ENCODE measurements at regions of chr6 and their contacts with region 1.

Region 1: GRCh38 chr6:111997078-111997852 is 56.6 kb upstream of the CCN6 start:
- DNase-seq: peak; percentile 60 to 82 (median 75)
- ATAC-seq: peak; percentile 89
- H3K4me3 ChIP-seq: peak overlapping the region; percentile 2
- H3K4me3 Mint-ChIP-seq: peak overlapping the region; percentile 58 to 91 (median 83)
- H3K27ac ChIP-seq: peak overlapping the region; percentile 55
- H3K27ac Mint-ChIP-seq: peak overlapping the region; percentile 44 to 97 (median 93)
- H3K4me1 ChIP-seq: peaks cover 19 to 45% of the 10 kb centered on the region in 2 donors
- H3K4me1 Mint-ChIP-seq: peaks cover 35 to 63% (median 50%) of the 10 kb centered on the region in 7 donors
- H3K27me3 ChIP-seq: no peaks in the 10 kb centered on the region
- H3K27me3 Mint-ChIP-seq: no peaks in the 10 kb centered on the region

Region 2: GRCh38 chr6:111605100-111605751 is 392.0 kb before region 1 on chr6:
- CTCF ChIA-PET with region 1: no interaction called
- POLR2A ChIA-PET with region 1: no interaction called
- intact Hi-C with region 1: loop called in 1 of 2 experiments (anchors 5 kb)
- DNase-seq: peak in 8 of 9 donors; percentile 12 to 60 (median 34)
- ATAC-seq: peak; percentile 56
- H3K4me3 ChIP-seq: peak overlapping the region; percentile 85
- H3K4me3 Mint-ChIP-seq: peak overlapping the region; percentile 89 to 97 (median 94)
- H3K27ac ChIP-seq: peak overlapping the region; percentile 84
- H3K27ac Mint-ChIP-seq: peak overlapping the region; percentile 90 to 98 (median 95)
- H3K4me1 ChIP-seq: peaks cover 13 to 15% of the 10 kb centered on the region in 2 donors
- H3K4me1 Mint-ChIP-seq: peaks cover 25 to 61% (median 58%) of the 10 kb centered on the region in 7 donors
- H3K27me3 ChIP-seq: no peaks in the 10 kb centered on the region
- H3K27me3 Mint-ChIP-seq: peaks cover 0 to 2% (median 0%) of the 10 kb centered on the region in 5 donors

Region 3: GRCh38 chr6:111764238-111765175 is 232.8 kb before region 1 on chr6:
- CTCF ChIA-PET with region 1: interaction called, 6 read pairs
- POLR2A ChIA-PET with region 1: no interaction called
- intact Hi-C with region 1: loop called (anchors 1 to 2 kb)
- DNase-seq: peak in 2 of 9 donors; percentile 48 to 63
- ATAC-seq: peak; percentile 23
- H3K4me3 ChIP-seq: peak overlapping the region; percentile 18
- H3K4me3 Mint-ChIP-seq: peak overlapping the region; percentile 48 to 94 (median 69)
- H3K27ac ChIP-seq: peak overlapping the region; percentile 97
- H3K27ac Mint-ChIP-seq: peak overlapping the region; percentile 84 to 100 (median 98)
- H3K4me1 ChIP-seq: peaks cover 90 to 93% of the 10 kb centered on the region in 2 donors
- H3K4me1 Mint-ChIP-seq: peaks cover 74 to 100% (median 99%) of the 10 kb centered on the region in 7 donors
- H3K27me3 ChIP-seq: no peaks in the 10 kb centered on the region
- H3K27me3 Mint-ChIP-seq: no peaks in the 10 kb centered on the region

Region 4: DNA sequence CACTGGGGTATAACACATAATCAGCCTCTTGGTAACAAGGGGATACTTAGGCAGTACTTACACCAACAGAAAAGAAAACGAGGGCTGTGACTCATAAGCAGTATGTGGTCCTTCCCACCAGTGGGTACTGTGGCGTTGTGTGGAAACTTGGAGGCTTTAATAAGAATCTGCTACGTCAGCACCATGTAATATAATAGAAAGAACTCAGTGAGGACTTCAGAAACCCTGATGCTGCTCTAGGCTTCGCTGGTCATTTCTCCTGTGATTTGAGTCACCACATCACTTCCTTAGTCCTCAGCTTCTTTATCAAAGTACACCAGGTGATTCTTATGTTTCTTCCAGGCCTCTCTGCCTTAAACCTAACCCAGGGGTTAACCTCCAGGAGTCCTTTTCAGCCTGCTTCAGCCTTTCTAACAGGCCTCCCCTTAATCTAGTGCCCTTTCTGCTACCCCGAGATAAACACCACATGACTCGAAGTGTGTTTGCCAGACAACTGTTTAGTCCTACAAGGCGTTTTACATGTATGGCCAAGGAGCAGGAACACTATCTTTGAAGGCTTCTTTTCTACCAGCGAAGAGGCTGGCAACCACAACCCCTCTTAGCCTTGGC is 192.5 kb before region 1 on chr6:
- CTCF ChIA-PET with region 1: interaction called, 4 read pairs
- POLR2A ChIA-PET with region 1: interaction called, 4 read pairs
- intact Hi-C with region 1: loop called (anchors 1 kb)
- DNase-seq: peak in 8 of 9 donors; percentile 31 to 77 (median 56)
- ATAC-seq: peak; percentile 89
- H3K4me3 ChIP-seq: peak overlapping the region; percentile 7
- H3K4me3 Mint-ChIP-seq: peak overlapping the region; percentile 20 to 73 (median 64)
- H3K27ac ChIP-seq: peak overlapping the region; percentile 68
- H3K27ac Mint-ChIP-seq: peak overlapping the region; percentile 78 to 97 (median 92)
- H3K4me1 ChIP-seq: peaks cover 59 to 64% of the 10 kb centered on the region in 2 donors
- H3K4me1 Mint-ChIP-seq: peaks cover 54 to 96% (median 88%) of the 10 kb centered on the region in 7 donors
- H3K27me3 ChIP-seq: no peaks in the 10 kb centered on the region
- H3K27me3 Mint-ChIP-seq: no peaks in the 10 kb centered on the region

Region 5: DNA sequence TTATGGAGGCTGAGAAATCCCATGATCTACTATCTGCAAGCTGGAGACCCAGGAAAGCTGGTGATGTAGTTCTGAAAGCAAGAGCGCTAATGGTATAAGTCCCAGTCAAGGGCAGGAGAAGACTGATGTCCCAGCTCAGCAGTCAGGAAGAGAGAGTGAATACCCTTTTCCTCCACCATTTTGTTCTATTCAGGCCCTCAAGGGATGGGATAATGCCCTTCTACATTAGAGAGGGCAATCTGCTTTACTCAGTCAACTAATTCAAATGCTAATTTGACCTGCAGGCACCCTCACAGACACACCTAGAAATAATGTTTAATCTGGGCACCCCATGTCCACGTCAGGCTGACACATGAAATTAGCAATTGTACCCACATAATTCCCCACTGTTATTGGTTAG is 113.2 kb before region 1 on chr6:
- CTCF ChIA-PET with region 1: no interaction called
- POLR2A ChIA-PET with region 1: no interaction called
- intact Hi-C with region 1: no loop called
- DNase-seq: no peak
- ATAC-seq: no peak
- H3K4me3 ChIP-seq: no peak overlapping the region
- H3K4me3 Mint-ChIP-seq: no peak overlapping the region
- H3K27ac ChIP-seq: no peak overlapping the region
- H3K27ac Mint-ChIP-seq: no peak overlapping the region
- H3K4me1 ChIP-seq: no peaks in the 10 kb centered on the region
- H3K4me1 Mint-ChIP-seq: peaks cover 0 to 2% (median 0%) of the 10 kb centered on the region in 7 donors
- H3K27me3 ChIP-seq: no peaks in the 10 kb centered on the region
- H3K27me3 Mint-ChIP-seq: peaks cover 0 to 15% (median 0%) of the 10 kb centered on the region in 5 donors

Region 6: DNA sequence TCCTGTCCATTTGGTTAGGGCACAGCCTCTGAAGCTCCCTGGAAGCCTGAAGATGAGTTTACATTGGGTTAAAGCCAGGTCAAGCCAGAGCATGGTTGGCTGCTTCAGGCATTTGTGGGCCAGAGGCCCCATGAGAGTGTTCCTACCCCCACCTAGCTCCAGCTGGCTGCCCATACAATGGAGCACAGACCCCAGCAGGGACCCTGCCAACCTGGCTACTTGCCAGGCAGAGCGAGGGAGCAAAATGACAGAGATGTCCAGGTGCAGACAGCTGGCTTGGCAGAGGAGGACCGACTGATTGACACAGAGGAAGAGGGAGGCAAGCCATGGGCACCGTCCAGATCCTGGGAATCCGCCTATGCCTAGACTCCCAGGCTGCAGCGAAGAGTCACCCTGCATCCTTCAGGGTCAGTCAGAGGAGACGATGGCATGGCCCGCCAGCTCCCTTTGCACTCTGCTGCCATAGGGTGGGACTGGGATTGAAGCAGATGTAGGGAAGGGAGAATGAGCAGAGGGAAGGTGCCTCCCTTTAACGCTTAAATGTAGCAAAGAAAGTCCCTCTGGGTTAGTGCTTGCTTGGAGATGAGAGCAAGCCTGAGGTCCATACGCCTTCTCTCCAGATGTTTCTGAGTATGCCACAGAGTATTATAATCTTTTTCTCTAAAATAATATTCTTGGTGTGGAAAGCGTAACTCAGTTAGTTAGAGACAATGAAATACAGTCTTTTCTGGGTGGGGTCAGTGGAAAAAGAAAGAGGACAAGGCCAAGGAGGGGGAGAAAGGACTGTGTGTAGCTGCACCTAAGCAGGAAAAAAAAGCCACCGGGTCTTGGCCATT is 46.4 kb before region 1 on chr6:
- CTCF ChIA-PET with region 1: no interaction called
- POLR2A ChIA-PET with region 1: no interaction called
- intact Hi-C with region 1: loop called in 1 of 2 experiments (anchors 5 kb)
- DNase-seq: no peak
- ATAC-seq: no peak
- H3K4me3 ChIP-seq: no peak overlapping the region
- H3K4me3 Mint-ChIP-seq: no peak overlapping the region
- H3K27ac ChIP-seq: no peak overlapping the region
- H3K27ac Mint-ChIP-seq: no peak overlapping the region
- H3K4me1 ChIP-seq: no peaks in the 10 kb centered on the region
- H3K4me1 Mint-ChIP-seq: peaks cover 7 to 22% (median 18%) of the 10 kb centered on the region in 7 donors
- H3K27me3 ChIP-seq: no peaks in the 10 kb centered on the region
- H3K27me3 Mint-ChIP-seq: peaks cover 0 to 31% (median 0%) of the 10 kb centered on the region in 5 donors

Region 7: DNA sequence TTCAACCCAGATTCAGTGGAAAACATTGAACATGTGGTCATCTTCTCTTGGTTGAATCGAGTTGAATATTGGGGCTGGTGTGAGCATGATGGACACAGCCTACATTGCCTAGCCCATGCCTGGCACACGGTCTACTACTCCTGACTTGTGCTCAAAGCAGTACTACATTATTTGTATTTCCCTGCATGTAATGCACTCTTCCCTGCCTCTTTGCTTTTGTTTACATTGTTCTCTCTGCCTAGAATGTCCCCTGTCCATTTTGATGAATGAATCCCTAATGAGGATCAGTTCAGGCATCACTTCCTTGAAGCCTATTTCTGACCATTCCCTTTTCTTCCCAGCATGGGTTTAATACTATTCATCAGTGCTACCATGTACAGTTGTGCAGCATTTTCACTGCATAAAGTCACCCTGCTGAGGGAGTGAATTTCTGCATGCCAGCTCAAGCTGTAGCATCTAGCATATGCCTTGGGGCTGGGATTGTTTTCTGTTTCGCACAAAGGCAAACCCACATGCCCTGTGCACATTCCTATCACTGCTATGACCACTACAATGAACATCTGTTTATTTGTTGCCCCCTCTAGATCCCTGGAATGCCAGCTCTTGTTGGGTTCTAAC is 18.6 kb before region 1 on chr6:
- CTCF ChIA-PET with region 1: interaction called, 19 read pairs
- POLR2A ChIA-PET with region 1: interaction called, 48 read pairs
- intact Hi-C with region 1: loop called (anchors 1 to 2 kb)
- DNase-seq: no peak
- ATAC-seq: no peak
- H3K4me3 ChIP-seq: no peak overlapping the region
- H3K4me3 Mint-ChIP-seq: peak overlapping the region in 6 of 10 donors; percentile 2 to 82 (median 44)
- H3K27ac ChIP-seq: no peak overlapping the region
- H3K27ac Mint-ChIP-seq: peak overlapping the region in 8 of 9 donors; percentile 55 to 98 (median 94)
- H3K4me1 ChIP-seq: peaks cover 2 to 89% of the 10 kb centered on the region in 2 donors
- H3K4me1 Mint-ChIP-seq: peaks cover 40 to 99% (median 91%) of the 10 kb centered on the region in 7 donors
- H3K27me3 ChIP-seq: no peaks in the 10 kb centered on the region
- H3K27me3 Mint-ChIP-seq: no peaks in the 10 kb centered on the region